WTC11 (cell line): ENCODE measurements at regions of chr7 and their contacts with region 1.

Region 1: GRCh38 chr7:19457097-19457496 is 251.7 kb downstream of the POLR1F start:
- DNase-seq: no peak
- ATAC-seq: no peak
- H3K4me3 Mint-ChIP-seq: no peak overlapping the region
- H3K27ac Mint-ChIP-seq: no peak overlapping the region
- H3K4me1 Mint-ChIP-seq: peaks cover 5% of the 10 kb centered on the region; the same call in 1 of the 2 replicates
- H3K27me3 Mint-ChIP-seq: no peaks in the 10 kb centered on the region
- CTCF ChIP-seq: no peak

Region 2: GRCh38 chr7:19024261-19024660 is 432.8 kb before region 1 on chr7:
- CTCF ChIA-PET with region 1: no interaction called
- POLR2A ChIA-PET with region 1: no interaction called
- DNase-seq: no peak
- ATAC-seq: no peak
- H3K4me3 Mint-ChIP-seq: no peak overlapping the region
- H3K27ac Mint-ChIP-seq: no peak overlapping the region
- H3K4me1 Mint-ChIP-seq: peaks cover 5% of the 10 kb centered on the region
- H3K27me3 Mint-ChIP-seq: no peaks in the 10 kb centered on the region
- CTCF ChIP-seq: no peak

Region 3: GRCh38 chr7:19442016-19442785 is 14.9 kb before region 1 on chr7:
- CTCF ChIA-PET with region 1: no interaction called
- POLR2A ChIA-PET with region 1: no interaction called
- DNase-seq: peak; percentile 15
- ATAC-seq: peak; percentile 98
- H3K4me3 Mint-ChIP-seq: no peak overlapping the region
- H3K27ac Mint-ChIP-seq: no peak overlapping the region
- H3K4me1 Mint-ChIP-seq: peaks cover 9% of the 10 kb centered on the region
- H3K27me3 Mint-ChIP-seq: no peaks in the 10 kb centered on the region
- CTCF ChIP-seq: no peak

Region 4: DNA sequence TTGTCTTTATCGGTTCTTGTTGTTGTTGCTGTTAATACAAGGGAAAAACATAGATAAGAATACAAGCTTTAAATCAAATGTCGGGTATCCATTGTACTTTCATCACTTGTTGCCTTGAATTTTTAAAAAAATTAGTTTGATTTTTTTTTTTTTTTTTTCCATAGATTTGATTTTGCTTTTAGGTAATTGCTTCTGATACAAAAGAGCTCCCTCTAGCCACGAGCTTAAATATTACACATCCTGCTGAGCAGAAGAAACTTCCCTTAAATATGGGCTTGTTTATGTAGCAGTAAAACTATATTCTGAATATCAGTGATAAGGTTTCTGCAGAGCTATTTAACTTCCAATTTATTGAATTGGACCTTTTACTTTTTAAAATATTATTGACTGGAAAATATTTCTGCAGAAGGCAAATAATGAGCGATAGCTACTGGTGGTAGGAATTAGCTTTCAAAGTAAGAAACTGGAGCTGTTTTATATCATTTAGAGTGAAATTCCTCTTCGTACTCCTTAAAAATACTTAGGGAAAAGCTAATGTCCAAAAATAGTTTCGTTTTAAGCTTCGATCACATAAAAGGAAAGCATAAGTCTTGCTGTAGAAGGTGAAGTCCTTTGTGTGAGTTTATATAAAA is 34.8 kb after region 1 on chr7:
- CTCF ChIA-PET with region 1: interaction called, 13 read pairs
- POLR2A ChIA-PET with region 1: no interaction called
- DNase-seq: no peak
- ATAC-seq: peak; percentile 57; the same call in 1 of the 2 replicates
- H3K4me3 Mint-ChIP-seq: no peak overlapping the region
- H3K27ac Mint-ChIP-seq: no peak overlapping the region
- H3K4me1 Mint-ChIP-seq: no peaks in the 10 kb centered on the region
- H3K27me3 Mint-ChIP-seq: peaks cover 1% of the 10 kb centered on the region; the same call in 1 of the 2 replicates
- CTCF ChIP-seq: no peak